ENCODE measurements at regions of chr12 and their contacts with region 1.

Region 1: DNA sequence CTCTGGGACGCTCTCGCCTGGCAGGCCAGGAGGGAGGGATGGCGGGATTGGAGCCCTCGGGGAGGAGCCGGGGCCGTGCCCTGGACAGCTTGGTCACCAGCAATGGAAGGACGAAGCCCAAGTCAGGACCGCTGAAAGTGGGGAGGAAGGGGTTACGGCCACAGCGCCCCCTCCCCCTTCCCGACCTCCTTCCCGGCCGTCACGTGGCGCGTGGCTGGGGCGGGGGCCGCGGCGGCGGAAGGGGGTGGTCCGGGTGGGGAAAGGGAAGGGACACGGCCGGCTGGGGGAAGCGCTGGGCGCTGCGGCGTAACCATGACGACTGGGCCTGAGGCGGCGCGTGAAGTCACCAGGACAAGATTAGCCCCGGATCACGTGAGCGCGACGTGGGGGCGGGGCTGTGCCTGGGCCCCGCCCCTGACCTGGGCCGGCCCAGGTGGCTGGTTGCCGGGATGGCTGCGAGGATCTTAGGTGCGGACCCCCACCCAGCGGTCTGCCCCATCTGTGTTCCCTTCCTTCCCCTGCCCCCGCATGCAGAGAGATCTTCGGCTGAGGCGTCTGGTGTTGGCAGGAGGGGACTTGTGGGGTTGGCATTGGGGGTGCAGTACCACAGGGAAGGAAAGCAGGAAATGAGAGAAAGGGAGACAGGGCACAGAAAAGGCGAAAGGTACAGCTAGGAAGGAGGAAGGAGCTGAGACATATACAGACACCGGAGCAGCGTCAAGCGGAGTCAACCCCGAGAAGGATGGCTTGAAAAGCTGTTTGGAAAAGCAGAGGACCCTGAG is 6.2 kb downstream of the MAP3K12 start:
- DNase-seq: peak; percentile 95
- ATAC-seq: peak; percentile 95
- H3K4me3 ChIP-seq: peak overlapping the region; percentile 51 to 68 (median 61)
- H3K4me3 Mint-ChIP-seq: peak overlapping the region; percentile 98
- H3K27ac ChIP-seq: peak overlapping the region; percentile 84 to 90
- H3K27ac Mint-ChIP-seq: peak overlapping the region; percentile 96
- H3K4me1 ChIP-seq: peaks cover 16 to 21% of the 10 kb centered on the region in 2 donors
- H3K4me1 Mint-ChIP-seq: peaks cover 23% of the 10 kb centered on the region
- H3K27me3 ChIP-seq: no peaks in the 10 kb centered on the region
- H3K27me3 Mint-ChIP-seq: no peaks in the 10 kb centered on the region
- CTCF ChIP-seq: no peak

Region 2: GRCh38 chr12:53220801-53221202 is 272.2 kb before region 1 on chr12:
- CTCF ChIA-PET with region 1: no interaction called
- POLR2A ChIA-PET with region 1: no interaction called
- intact Hi-C with region 1: no loop called
- DNase-seq: peak; percentile 92
- ATAC-seq: peak; percentile 76
- H3K4me3 ChIP-seq: peak overlapping the region; percentile 63 to 100 (median 90)
- H3K4me3 Mint-ChIP-seq: peak overlapping the region; percentile 97
- H3K27ac ChIP-seq: peak overlapping the region; percentile 93 to 95
- H3K27ac Mint-ChIP-seq: peak overlapping the region; percentile 98
- H3K4me1 ChIP-seq: peaks cover 39 to 56% of the 10 kb centered on the region in 2 donors
- H3K4me1 Mint-ChIP-seq: peaks cover 53% of the 10 kb centered on the region
- H3K27me3 ChIP-seq: no peaks in the 10 kb centered on the region
- H3K27me3 Mint-ChIP-seq: no peaks in the 10 kb centered on the region
- CTCF ChIP-seq: no peak

Region 3: DNA sequence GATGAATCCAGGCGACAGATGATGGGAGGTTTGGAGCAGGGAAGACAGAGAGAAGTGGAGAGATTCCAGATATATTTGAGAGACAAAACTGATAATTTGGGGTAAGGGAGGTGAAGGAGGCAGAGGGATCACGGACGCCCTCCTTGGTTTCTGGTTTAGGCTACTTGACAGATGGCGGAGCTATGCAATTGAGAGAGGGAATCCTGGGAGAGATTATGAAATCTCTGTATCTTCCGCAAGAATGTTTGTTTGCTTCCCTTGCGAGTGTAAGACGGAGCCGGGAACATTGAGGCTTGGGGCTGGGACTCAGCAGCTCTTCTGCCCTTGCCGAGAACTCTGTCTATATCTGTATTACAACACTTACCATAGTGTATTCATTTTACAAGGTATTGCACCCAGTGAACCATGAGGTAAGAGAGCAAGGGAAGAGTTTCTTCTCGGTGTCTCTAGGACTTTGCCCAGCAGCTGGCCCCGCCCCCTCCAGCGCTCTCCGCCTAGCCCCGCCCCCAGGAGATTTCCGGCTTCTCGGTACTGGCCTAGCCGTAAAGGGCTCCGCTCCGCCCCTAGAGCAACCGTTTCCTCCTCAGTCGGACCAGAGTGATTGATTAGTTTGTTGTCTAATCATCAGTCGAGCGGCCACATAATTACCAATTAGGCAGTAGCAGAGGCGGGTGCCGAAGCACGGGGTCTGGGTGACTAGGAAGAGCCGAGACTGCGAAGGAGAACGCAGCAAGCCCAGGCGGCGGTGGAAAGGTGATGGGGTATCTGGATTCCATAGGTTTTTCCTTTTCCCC is 51.8 kb before region 1 on chr12 and contains the start of gene PRR13:
- CTCF ChIA-PET with region 1: no interaction called
- POLR2A ChIA-PET with region 1: interaction called, 3 read pairs
- intact Hi-C with region 1: loop called (anchors 2 kb)
- DNase-seq: peak; percentile 98
- ATAC-seq: peak; percentile 97
- H3K4me3 ChIP-seq: peak within 1 kb of the TSS; percentile 85 to 99 (median 94)
- H3K4me3 Mint-ChIP-seq: peak within 1 kb of the TSS; percentile 97
- H3K27ac ChIP-seq: peak within 1 kb of the TSS; percentile 62 to 93
- H3K27ac Mint-ChIP-seq: peak within 1 kb of the TSS; percentile 99
- H3K4me1 ChIP-seq: peaks cover 21 to 25% of the 10 kb centered on the region in 2 donors
- H3K4me1 Mint-ChIP-seq: peaks cover 40% of the 10 kb centered on the region
- H3K27me3 ChIP-seq: no peaks in the 10 kb centered on the region
- H3K27me3 Mint-ChIP-seq: no peaks in the 10 kb centered on the region
- CTCF ChIP-seq: no peak
- total RNA-seq, gene PRR13: 200 and 213 TPM in 2 replicates

Region 4: GRCh38 chr12:53481957-53482586 is 10.9 kb before region 1 on chr12:
- CTCF ChIA-PET with region 1: interaction called, 12 read pairs
- POLR2A ChIA-PET with region 1: no interaction called
- intact Hi-C with region 1: no loop called
- DNase-seq: peak; percentile 44
- ATAC-seq: peak; percentile 35
- H3K4me3 ChIP-seq: no peak overlapping the region
- H3K4me3 Mint-ChIP-seq: no peak overlapping the region
- H3K27ac ChIP-seq: peak overlapping the region in 1 of 2 donors; percentile 23
- H3K27ac Mint-ChIP-seq: no peak overlapping the region
- H3K4me1 ChIP-seq: no peaks in the 10 kb centered on the region
- H3K4me1 Mint-ChIP-seq: peaks cover 4% of the 10 kb centered on the region
- H3K27me3 ChIP-seq: no peaks in the 10 kb centered on the region
- H3K27me3 Mint-ChIP-seq: no peaks in the 10 kb centered on the region
- CTCF ChIP-seq: peak; percentile 39

Region 5: GRCh38 chr12:53575502-53576253 is 82.7 kb after region 1 on chr12:
- CTCF ChIA-PET with region 1: no interaction called
- POLR2A ChIA-PET with region 1: no interaction called
- intact Hi-C with region 1: no loop called
- DNase-seq: no peak
- ATAC-seq: no peak
- H3K4me3 ChIP-seq: no peak overlapping the region
- H3K4me3 Mint-ChIP-seq: no peak overlapping the region
- H3K27ac ChIP-seq: no peak overlapping the region
- H3K27ac Mint-ChIP-seq: no peak overlapping the region
- H3K4me1 ChIP-seq: peaks cover 12 to 15% of the 10 kb centered on the region in 2 donors
- H3K4me1 Mint-ChIP-seq: peaks cover 28% of the 10 kb centered on the region
- H3K27me3 ChIP-seq: no peaks in the 10 kb centered on the region
- H3K27me3 Mint-ChIP-seq: no peaks in the 10 kb centered on the region
- CTCF ChIP-seq: no peak